GM13976 (cell line): ENCODE measurements at regions of chr9 and their contacts with region 1.

Region 1: DNA sequence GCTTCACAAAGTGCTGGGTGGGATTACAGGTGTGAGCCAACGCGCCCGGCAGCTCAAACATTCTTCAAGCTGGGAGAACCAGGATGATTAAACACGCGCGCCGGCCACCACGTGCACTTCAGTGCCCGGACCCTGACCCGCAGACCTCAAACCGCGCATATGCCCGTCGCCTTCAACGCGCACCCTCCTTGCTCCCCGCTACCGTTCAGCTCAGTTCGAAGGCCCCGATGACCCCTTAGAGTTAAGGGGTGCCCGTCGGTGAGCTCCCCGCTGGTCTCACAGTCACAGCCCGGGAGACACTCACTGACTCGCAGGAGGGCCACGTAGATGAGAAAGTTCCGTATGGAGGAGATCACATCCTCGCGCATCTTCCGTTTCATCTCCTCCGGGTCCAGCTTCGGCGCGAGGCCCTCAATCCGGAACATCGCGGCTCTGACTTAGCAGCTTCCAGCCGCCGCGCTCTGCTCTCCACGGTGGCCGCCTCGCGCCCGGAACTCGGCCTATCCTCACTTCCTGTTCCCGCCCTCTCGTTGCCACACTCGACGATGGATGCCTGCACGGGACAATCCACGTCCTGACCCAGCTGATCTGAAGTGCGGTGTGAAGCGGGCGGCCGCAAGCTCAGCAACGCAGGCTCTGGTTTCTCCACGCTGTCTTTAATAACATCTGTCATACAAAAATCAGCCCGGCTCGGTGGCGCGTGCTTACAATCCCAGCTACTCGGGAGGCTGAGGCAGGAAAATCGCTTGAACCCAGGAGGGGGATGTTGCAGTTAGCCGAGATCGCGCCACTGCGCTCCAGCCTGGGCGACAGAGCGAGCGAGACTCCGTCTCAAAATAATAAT is at the start of gene TOMM5:
- DNase-seq: peak; percentile 91
- CTCF ChIP-seq: peak; percentile 3

Region 2: DNA sequence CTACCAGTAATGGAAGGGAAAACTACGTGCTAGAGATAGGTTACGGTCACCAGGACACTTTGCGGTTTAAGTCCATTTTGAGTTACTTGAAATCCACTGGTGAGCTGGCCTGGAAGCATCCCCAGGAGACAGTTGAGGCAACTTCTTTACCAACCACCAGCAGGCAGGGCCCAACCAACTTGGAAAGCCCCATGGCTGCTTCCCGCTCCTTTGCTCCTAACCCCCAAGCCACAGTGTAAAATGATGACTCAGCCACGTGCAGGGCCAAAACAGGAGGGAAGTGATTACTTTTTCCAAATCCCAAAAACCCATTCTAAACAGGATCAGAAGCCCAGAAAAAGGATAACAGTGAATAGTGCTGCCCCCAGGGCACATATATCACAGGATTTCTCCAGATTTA is 645.7 kb before region 1 on chr9:
- in situ Hi-C with region 1: no loop called
- DNase-seq: no peak
- CTCF ChIP-seq: no peak

Region 3: GRCh38 chr9:37485389-37486219 is 106.7 kb before region 1 on chr9 and contains the start of gene POLR1E:
- in situ Hi-C with region 1: loop called (anchors 10 kb)
- DNase-seq: peak; percentile 100
- CTCF ChIP-seq: no peak